BJ (cell line): ENCODE measurements at regions of chr3 and their contacts with region 1.

Region 1: GRCh38 chr3:29531644-29532043 is 250.8 kb downstream of the RBMS3 start:
- DNase-seq: no peak
- H3K4me3 ChIP-seq: no peak overlapping the region
- H3K27me3 ChIP-seq: no peaks in the 10 kb centered on the region
- CTCF ChIP-seq: no peak

Region 2: GRCh38 chr3:29711255-29711771 is 179.7 kb after region 1 on chr3:
- CTCF ChIA-PET with region 1: no interaction called
- POLR2A ChIA-PET with region 1: interaction called, 13 read pairs
- DNase-seq: no peak
- H3K4me3 ChIP-seq: no peak overlapping the region
- H3K27me3 ChIP-seq: no peaks in the 10 kb centered on the region
- CTCF ChIP-seq: no peak